HepG2 (cell line): ENCODE measurements at regions of chr6 and their contacts with region 1.

Region 1: DNA sequence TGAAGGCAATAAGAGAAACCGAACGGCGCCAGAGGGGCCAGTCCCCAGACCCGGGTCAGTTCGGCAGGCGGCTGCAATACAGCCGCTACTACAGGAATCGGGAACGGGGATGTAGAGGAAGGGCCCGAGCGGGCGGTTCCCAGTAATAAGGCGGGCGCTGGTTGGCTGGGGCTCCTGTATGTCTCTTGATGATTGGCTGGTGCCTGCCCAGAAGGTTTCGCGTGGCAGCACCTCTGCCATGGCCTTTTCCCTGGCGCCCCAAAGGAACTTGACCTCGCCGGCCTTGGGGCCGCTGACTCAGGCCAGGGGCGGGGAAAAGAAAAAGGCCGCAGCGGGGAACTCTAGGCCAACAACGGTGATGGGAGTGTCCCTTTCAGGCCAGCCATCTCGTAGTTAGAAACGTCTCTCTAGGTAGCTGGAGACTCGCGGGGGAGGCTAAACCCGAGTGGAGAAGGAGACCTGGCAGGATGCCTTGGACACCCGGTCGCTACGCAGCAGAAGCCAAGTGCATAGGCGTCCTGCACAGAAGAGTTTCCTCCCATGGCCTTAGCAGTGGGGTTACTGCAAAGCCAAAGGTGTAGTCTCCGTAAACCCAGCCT is at the start of gene IBTK:
- DNase-seq: peak; percentile 94
- ATAC-seq: peak; percentile 88
- H3K4me3 ChIP-seq: peak within 1 kb of the TSS; percentile 73 to 87 (median 83)
- H3K27ac ChIP-seq: peak within 1 kb of the TSS; percentile 100
- H3K4me1 ChIP-seq: peaks cover 45% of the 10 kb centered on the region
- H3K27me3 ChIP-seq: no peaks in the 10 kb centered on the region; a peak in 1 of 5 replicates
- CTCF ChIP-seq: no peak
- EP300 ChIP-seq: peak in 1 of 2 experiments; percentile 39; a peak in 1 of 4 replicates
- POLR2A ChIP-seq: peak; percentile 27 to 71; a peak in 3 of 4 replicates
- RAD21 ChIP-seq: peak; percentile 7; the same call in 1 of the 2 replicates
- total RNA-seq, gene IBTK: 60.0 and 94.7 TPM in 2 replicates

Region 2: GRCh38 chr6:81938014-81938856 is 309.5 kb before region 1 on chr6:
- CTCF ChIA-PET with region 1: no interaction called
- POLR2A ChIA-PET with region 1: no interaction called
- in situ Hi-C with region 1: no loop called
- intact Hi-C with region 1: loop called (anchors 1 kb)
- DNase-seq: peak; percentile 93
- ATAC-seq: peak; percentile 91
- H3K4me3 ChIP-seq: peak overlapping the region; percentile 11 to 43 (median 37); a peak in 4 of 6 replicates
- H3K27ac ChIP-seq: peak overlapping the region; percentile 64
- H3K4me1 ChIP-seq: peaks cover 65% of the 10 kb centered on the region
- H3K27me3 ChIP-seq: no peaks in the 10 kb centered on the region
- CTCF ChIP-seq: no peak
- EP300 ChIP-seq: peak in 1 of 2 experiments; percentile 80; a peak in 2 of 4 replicates
- POLR2A ChIP-seq: no peak
- RAD21 ChIP-seq: no peak

Region 3: DNA sequence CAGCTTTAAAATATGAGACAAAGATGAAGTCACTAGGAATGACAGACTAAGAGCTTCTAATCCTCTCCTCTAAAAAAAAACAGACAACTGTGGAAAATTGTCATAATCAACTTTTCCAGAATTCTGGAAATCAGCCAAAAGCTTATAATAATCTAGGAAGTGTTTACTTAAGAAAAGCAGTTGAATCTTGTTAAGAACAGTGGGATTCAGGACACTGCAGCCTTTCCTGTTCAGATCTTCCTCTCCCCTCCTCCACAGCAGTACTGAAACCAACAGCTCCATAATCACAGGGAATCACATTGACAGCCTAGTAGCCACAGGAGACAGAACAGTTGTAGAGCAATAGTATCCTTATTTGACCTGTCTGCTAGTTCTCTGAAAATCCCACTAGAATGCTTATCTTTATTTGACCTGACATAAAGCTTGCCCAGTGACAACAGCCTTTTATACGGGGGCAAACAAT is 41.8 kb before region 1 on chr6:
- CTCF ChIA-PET with region 1: no interaction called
- POLR2A ChIA-PET with region 1: no interaction called
- in situ Hi-C with region 1: no loop called
- intact Hi-C with region 1: no loop called
- DNase-seq: peak; percentile 5
- ATAC-seq: peak; percentile 49; the same call in 2 of the 3 replicates
- H3K4me3 ChIP-seq: no peak overlapping the region
- H3K27ac ChIP-seq: no peak overlapping the region
- H3K4me1 ChIP-seq: no peaks in the 10 kb centered on the region
- H3K27me3 ChIP-seq: no peaks in the 10 kb centered on the region
- CTCF ChIP-seq: no peak
- EP300 ChIP-seq: no peak
- POLR2A ChIP-seq: no peak
- RAD21 ChIP-seq: no peak

Region 4: GRCh38 chr6:82363351-82364086 is 115.8 kb after region 1 on chr6 and contains the start of gene TPBG:
- CTCF ChIA-PET with region 1: no interaction called
- POLR2A ChIA-PET with region 1: no interaction called
- in situ Hi-C with region 1: no loop called
- intact Hi-C with region 1: loop called (anchors 5 kb)
- DNase-seq: peak; percentile 27
- ATAC-seq: peak; percentile 90
- H3K4me3 ChIP-seq: peak within 1 kb of the TSS; percentile 51 to 73 (median 63)
- H3K27ac ChIP-seq: no peak within 1 kb of the TSS
- H3K4me1 ChIP-seq: peaks cover 5% of the 10 kb centered on the region; the same call in 1 of the 2 replicates
- H3K27me3 ChIP-seq: peaks cover 0 to 22% of the 10 kb centered on the region in 2 experiments; a peak in 2 of 5 replicates
- CTCF ChIP-seq: peak; percentile 59
- EP300 ChIP-seq: no peak
- POLR2A ChIP-seq: no peak
- RAD21 ChIP-seq: 0 out of 2 replicates have a peak, but pooled peaks have one; percentile 18
- total RNA-seq, gene TPBG: 0.39 and 0.75 TPM in 2 replicates

Region 5: DNA sequence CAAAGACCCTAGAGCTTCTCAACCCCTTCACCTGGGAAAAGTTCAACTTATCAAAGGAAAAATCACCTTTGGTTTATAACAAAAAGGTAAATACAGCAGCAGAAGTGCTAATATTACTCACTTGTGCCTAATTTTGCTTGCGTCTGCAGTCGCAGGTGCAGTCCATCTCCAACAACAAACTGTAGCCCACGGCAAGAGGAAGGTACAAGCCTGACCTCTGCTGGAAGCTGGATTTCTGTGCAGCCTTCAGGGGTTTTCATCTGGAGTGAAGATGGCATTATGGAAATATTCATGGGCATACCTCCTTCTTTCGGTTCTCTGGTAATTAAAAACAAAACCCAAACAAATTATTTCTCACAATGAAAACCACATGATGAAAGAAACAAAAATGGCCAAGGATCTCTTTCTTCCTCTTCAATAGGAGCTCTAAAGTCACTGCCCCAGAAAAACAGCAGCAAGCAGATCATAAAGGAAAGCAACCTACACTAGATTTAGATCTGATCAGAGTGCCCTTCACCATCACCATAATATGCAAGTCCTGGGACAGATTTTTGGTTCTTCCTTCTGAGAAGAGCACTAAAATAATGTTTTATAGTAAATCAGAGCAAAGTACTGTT is 810.1 kb after region 1 on chr6:
- CTCF ChIA-PET with region 1: interaction called, 11 read pairs
- POLR2A ChIA-PET with region 1: no interaction called
- in situ Hi-C with region 1: no loop called
- intact Hi-C with region 1: loop called (anchors 1 kb)
- DNase-seq: peak; percentile 42
- ATAC-seq: peak; percentile 90
- H3K4me3 ChIP-seq: no peak overlapping the region
- H3K27ac ChIP-seq: no peak overlapping the region
- H3K4me1 ChIP-seq: no peaks in the 10 kb centered on the region
- H3K27me3 ChIP-seq: no peaks in the 10 kb centered on the region
- CTCF ChIP-seq: peak; percentile 76
- EP300 ChIP-seq: no peak
- POLR2A ChIP-seq: no peak
- RAD21 ChIP-seq: peak; percentile 37; the same call in 1 of the 2 replicates

Region 6: GRCh38 chr6:83192871-83193746 is 945.4 kb after region 1 on chr6 and contains the starts of genes PGM3 and RWDD2A:
- CTCF ChIA-PET with region 1: no interaction called
- POLR2A ChIA-PET with region 1: interaction called, 3 read pairs
- in situ Hi-C with region 1: loop called (anchors 25 kb)
- intact Hi-C with region 1: loop called (anchors 5 kb)
- DNase-seq: peak; percentile 84
- ATAC-seq: peak; percentile 95
- H3K4me3 ChIP-seq: peak within 1 kb of the TSS; percentile 90 to 98 (median 97)
- H3K27ac ChIP-seq: peak within 1 kb of the TSS; percentile 95
- H3K4me1 ChIP-seq: peaks cover 45% of the 10 kb centered on the region
- H3K27me3 ChIP-seq: no peaks in the 10 kb centered on the region; a peak in 1 of 5 replicates
- CTCF ChIP-seq: no peak
- EP300 ChIP-seq: no peak
- POLR2A ChIP-seq: peak; percentile 94
- RAD21 ChIP-seq: peak; percentile 38; the same call in 1 of the 2 replicates
- total RNA-seq, gene PGM3: 163 and 231 TPM in 2 replicates
- total RNA-seq, gene RWDD2A: 5.3 and 6.9 TPM in 2 replicates

Region 7: DNA sequence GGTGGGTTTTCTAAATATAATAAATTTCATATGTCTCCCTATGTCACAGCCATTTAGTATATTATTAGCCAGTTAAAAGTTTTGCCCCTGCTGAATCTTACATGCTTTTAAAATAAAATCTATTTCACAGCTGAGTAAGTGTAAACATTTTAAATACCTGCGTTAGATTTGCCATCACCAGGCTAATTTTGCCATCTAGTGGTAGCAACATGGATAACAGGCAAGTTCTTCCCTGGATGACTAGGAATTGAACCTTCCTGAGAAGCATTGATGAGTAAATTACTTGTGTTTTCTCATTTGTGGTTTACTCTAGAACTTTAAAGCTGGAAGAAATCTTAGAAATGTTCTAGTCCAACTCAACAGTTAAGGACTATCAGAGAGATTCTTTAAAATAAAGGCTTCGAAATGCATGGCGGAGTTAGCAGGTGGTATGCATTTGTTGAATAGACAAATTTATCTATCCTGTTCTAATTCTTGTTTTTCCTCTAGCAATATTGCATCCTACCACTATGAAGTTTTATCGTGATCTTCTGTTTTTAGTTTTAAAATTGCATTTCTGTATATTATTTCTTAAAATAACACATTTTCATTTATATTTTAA is 1267.2 kb after region 1 on chr6:
- CTCF ChIA-PET with region 1: no interaction called
- POLR2A ChIA-PET with region 1: no interaction called
- in situ Hi-C with region 1: loop called (anchors 25 kb)
- intact Hi-C with region 1: loop called (anchors 10 kb)
- DNase-seq: peak; percentile 29
- ATAC-seq: peak; percentile 37; the same call in 1 of the 3 replicates
- H3K4me3 ChIP-seq: no peak overlapping the region
- H3K27ac ChIP-seq: no peak overlapping the region
- H3K4me1 ChIP-seq: 0 out of 2 replicates have a peak, but pooled peaks cover 14% of the 10 kb centered on the region
- H3K27me3 ChIP-seq: peaks cover 0 to 14% of the 10 kb centered on the region in 2 experiments; a peak in 2 of 5 replicates
- CTCF ChIP-seq: peak; percentile 76
- EP300 ChIP-seq: no peak
- POLR2A ChIP-seq: no peak
- RAD21 ChIP-seq: peak; percentile 45; the same call in 1 of the 2 replicates